Common myeloid progenitor, CD34-positive (primary cell): ENCODE measurements at regions of chr4 and their contacts with region 1.

Region 1: GRCh38 chr4:155675709-155676429 is 9.2 kb downstream of the GUCY1A1 start:
- DNase-seq: peak; percentile 67 to 94 (median 88)
- H3K4me3 ChIP-seq: peak overlapping the region in 6 of 7 experiments; percentile 11 to 70 (median 49)
- H3K27ac ChIP-seq: peak overlapping the region; percentile 62 to 81
- H3K4me1 ChIP-seq: peaks cover 32 to 94% (median 68%) of the 10 kb centered on the region in 4 experiments
- H3K27me3 ChIP-seq: no peaks in the 10 kb centered on the region

Region 2: GRCh38 chr4:155659176-155659575 is 16.7 kb before region 1 on chr4:
- CTCF ChIA-PET with region 1: interaction called, 15 read pairs
- POLR2A ChIA-PET with region 1: no interaction called
- DNase-seq: no peak
- H3K4me3 ChIP-seq: no peak overlapping the region
- H3K27ac ChIP-seq: no peak overlapping the region
- H3K4me1 ChIP-seq: peaks cover 1 to 16% (median 8%) of the 10 kb centered on the region in 4 experiments
- H3K27me3 ChIP-seq: no peaks in the 10 kb centered on the region